A673 (cell line): ENCODE measurements at regions of chr3 and their contacts with region 1.

Region 1: DNA sequence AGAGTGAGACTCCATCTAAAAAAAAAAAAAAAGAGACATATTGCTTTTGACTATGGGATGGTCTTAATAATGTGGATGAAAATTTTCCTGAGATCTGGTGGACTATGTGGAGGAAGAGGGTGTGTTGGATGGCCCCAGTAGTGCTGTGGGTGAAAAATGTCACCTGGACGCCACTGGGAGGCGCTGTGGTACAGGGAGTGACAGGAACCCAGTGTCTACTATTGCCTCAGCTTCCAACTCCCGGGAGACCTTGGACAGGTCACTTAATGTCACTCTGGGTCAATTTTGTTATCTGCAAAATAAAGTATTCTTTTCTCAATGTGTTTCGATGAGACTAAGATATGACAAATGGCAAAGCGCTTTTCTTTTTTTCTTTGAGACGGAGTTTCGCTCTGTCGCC is 27.7 kb upstream of the DCP1A start:
- DNase-seq: peak; percentile 52
- H3K4me3 ChIP-seq: no peak overlapping the region
- H3K27ac ChIP-seq: no peak overlapping the region
- H3K4me1 ChIP-seq: no peaks in the 10 kb centered on the region
- H3K27me3 ChIP-seq: no peaks in the 10 kb centered on the region
- CTCF ChIP-seq: peak; percentile 66

Region 2: GRCh38 chr3:53328746-53329145 is 46.3 kb before region 1 on chr3:
- CTCF ChIA-PET with region 1: no interaction called
- POLR2A ChIA-PET with region 1: no interaction called
- intact Hi-C with region 1: no loop called
- DNase-seq: no peak
- H3K4me3 ChIP-seq: no peak overlapping the region
- H3K27ac ChIP-seq: no peak overlapping the region
- H3K4me1 ChIP-seq: no peaks in the 10 kb centered on the region
- H3K27me3 ChIP-seq: no peaks in the 10 kb centered on the region
- CTCF ChIP-seq: no peak

Region 3: GRCh38 chr3:53709860-53710674 is 335.0 kb after region 1 on chr3:
- CTCF ChIA-PET with region 1: interaction called, 3 read pairs
- POLR2A ChIA-PET with region 1: no interaction called
- intact Hi-C with region 1: loop called (anchors 1 kb)
- DNase-seq: peak; percentile 42
- H3K4me3 ChIP-seq: no peak overlapping the region
- H3K27ac ChIP-seq: no peak overlapping the region
- H3K4me1 ChIP-seq: no peaks in the 10 kb centered on the region
- H3K27me3 ChIP-seq: no peaks in the 10 kb centered on the region
- CTCF ChIP-seq: peak; percentile 63